Activated CD4-positive, alpha-beta memory T cell treated with anti-CD3 and anti-CD28 coated beads for 36 hours (primary cell): ENCODE measurements at regions of chr4 and their contacts with region 1.

Region 1: GRCh38 chr4:121800961-121801714 is at the start of gene EXOSC9:
- DNase-seq: peak; percentile 95
- H3K4me3 Mint-ChIP-seq: peak within 1 kb of the TSS; percentile 84
- H3K27ac Mint-ChIP-seq: peak within 1 kb of the TSS; percentile 94
- H3K4me1 Mint-ChIP-seq: peaks cover 45% of the 10 kb centered on the region
- H3K27me3 Mint-ChIP-seq: no peaks in the 10 kb centered on the region
- total RNA-seq, gene EXOSC9: 65.9 to 68.0 TPM

Region 2: GRCh38 chr4:121696581-121697461 is 104.3 kb before region 1 on chr4 and contains the start of gene ANXA5:
- CTCF ChIA-PET with region 1: interaction called, 3 read pairs
- POLR2A ChIA-PET with region 1: interaction called, 4 read pairs
- intact Hi-C with region 1: loop called (anchors 1 kb)
- DNase-seq: peak; percentile 86
- H3K4me3 Mint-ChIP-seq: peak within 1 kb of the TSS; percentile 99
- H3K27ac Mint-ChIP-seq: peak within 1 kb of the TSS; percentile 99
- H3K4me1 Mint-ChIP-seq: peaks cover 37% of the 10 kb centered on the region
- H3K27me3 Mint-ChIP-seq: peaks cover 10% of the 10 kb centered on the region
- total RNA-seq, gene ANXA5: 132 to 140 TPM

Region 3: GRCh38 chr4:121823505-121824170 is 22.5 kb after region 1 on chr4 and contains the start of gene CCNA2:
- CTCF ChIA-PET with region 1: no interaction called
- POLR2A ChIA-PET with region 1: interaction called, 6 read pairs
- intact Hi-C with region 1: loop called (anchors 1 kb)
- DNase-seq: peak; percentile 99
- H3K4me3 Mint-ChIP-seq: peak within 1 kb of the TSS; percentile 97
- H3K27ac Mint-ChIP-seq: peak within 1 kb of the TSS; percentile 81
- H3K4me1 Mint-ChIP-seq: peaks cover 25% of the 10 kb centered on the region
- H3K27me3 Mint-ChIP-seq: no peaks in the 10 kb centered on the region
- total RNA-seq, gene CCNA2: 98.2 to 100 TPM